Heart right ventricle (tissue), 16 donors: ENCODE measurements at regions of chr11 and their contacts with region 1.

Region 1: GRCh38 chr11:130002846-130003716 is 446 bp upstream of the PRDM10 start:
- DNase-seq: peak; percentile 93 to 96
- ATAC-seq: peak; percentile 86 to 97 (median 94)
- H3K4me3 ChIP-seq: peak overlapping the region; percentile 8 to 92 (median 74)
- H3K27ac ChIP-seq: peak overlapping the region; percentile 92 to 100 (median 99)
- H3K4me1 ChIP-seq: peaks cover 3 to 35% (median 18%) of the 10 kb centered on the region in 9 donors
- H3K27me3 ChIP-seq: no peaks in the 10 kb centered on the region
- CTCF ChIP-seq: no peak

Region 2: GRCh38 chr11:130042093-130042591 is 39.1 kb after region 1 on chr11:
- intact Hi-C with region 1: no loop called
- DNase-seq: peak in 1 of 2 donors; percentile 4
- ATAC-seq: peak in 6 of 8 donors; percentile 47 to 81 (median 66)
- H3K4me3 ChIP-seq: no peak overlapping the region
- H3K27ac ChIP-seq: peak overlapping the region in 1 of 10 donors; percentile 85
- H3K4me1 ChIP-seq: peaks cover 0 to 19% (median 0%) of the 10 kb centered on the region in 9 donors
- H3K27me3 ChIP-seq: no peaks in the 10 kb centered on the region
- CTCF ChIP-seq: no peak

Region 3: DNA sequence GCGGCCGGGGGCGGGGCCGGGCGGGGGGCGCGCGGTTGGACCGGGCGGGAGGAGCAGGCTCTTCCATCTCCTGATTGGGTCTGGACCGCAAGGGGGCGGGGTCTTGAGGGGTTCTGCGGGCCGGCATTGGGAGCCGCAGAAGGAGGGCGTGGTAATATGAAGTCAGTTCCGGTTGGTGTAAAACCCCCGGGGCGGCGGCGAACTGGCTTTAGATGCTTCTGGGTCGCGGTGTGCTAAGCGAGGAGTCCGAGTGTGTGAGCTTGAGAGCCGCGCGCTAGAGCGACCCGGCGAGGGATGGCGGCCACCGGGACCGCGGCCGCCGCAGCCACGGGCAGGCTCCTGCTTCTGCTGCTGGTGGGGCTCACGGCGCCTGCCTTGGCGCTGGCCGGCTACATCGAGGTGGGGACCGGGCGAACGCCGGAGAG is 66.6 kb after region 1 on chr11 and contains the start of gene APLP2:
- intact Hi-C with region 1: loop called in 9 of 10 experiments (anchors 1 to 5 kb)
- DNase-seq: peak; percentile 99 to 100
- ATAC-seq: peak; percentile 94 to 98 (median 96)
- H3K4me3 ChIP-seq: peak within 1 kb of the TSS; percentile 64 to 86 (median 80)
- H3K27ac ChIP-seq: peak within 1 kb of the TSS; percentile 81 to 99 (median 95)
- H3K4me1 ChIP-seq: peaks cover 0 to 34% (median 21%) of the 10 kb centered on the region in 9 donors
- H3K27me3 ChIP-seq: no peaks in the 10 kb centered on the region
- CTCF ChIP-seq: no peak
- total RNA-seq, gene APLP2: 265 to 414 (median 309) TPM

Region 4: DNA sequence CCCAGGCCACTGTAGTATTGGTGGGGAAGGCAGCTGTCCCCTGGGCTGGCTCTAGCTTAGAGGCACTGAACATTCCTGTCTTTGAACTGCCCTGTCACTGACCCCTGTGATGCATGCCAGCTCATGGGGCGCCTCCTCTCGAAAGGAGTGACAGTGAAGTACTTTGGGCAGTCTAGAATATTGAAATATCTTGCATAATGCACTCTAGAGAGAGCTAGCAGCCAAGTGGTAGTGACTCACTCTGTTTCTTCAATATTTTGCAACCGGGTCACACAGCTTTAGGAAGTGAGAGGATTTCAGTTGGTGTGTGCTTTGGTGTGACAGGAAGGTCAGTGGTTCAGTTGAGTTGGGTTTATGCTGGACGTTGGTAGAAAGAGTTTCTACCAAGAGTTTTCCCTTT is 121.0 kb after region 1 on chr11:
- intact Hi-C with region 1: loop called in 2 of 10 experiments (anchors 5 kb)
- DNase-seq: peak; percentile 53 to 72
- ATAC-seq: peak; percentile 81 to 99 (median 86)
- H3K4me3 ChIP-seq: no peak overlapping the region
- H3K27ac ChIP-seq: peak overlapping the region in 7 of 10 donors; percentile 27 to 83 (median 54)
- H3K4me1 ChIP-seq: peaks cover 0 to 75% (median 38%) of the 10 kb centered on the region in 9 donors
- H3K27me3 ChIP-seq: no peaks in the 10 kb centered on the region
- CTCF ChIP-seq: no peak

Region 5: GRCh38 chr11:130139401-130139800 is 136.3 kb after region 1 on chr11:
- intact Hi-C with region 1: loop called in 5 of 10 experiments (anchors 5 to 10 kb)
- DNase-seq: no peak
- ATAC-seq: peak in 7 of 8 donors; percentile 59 to 83 (median 74)
- H3K4me3 ChIP-seq: no peak overlapping the region
- H3K27ac ChIP-seq: peak overlapping the region in 7 of 10 donors; percentile 11 to 61 (median 48)
- H3K4me1 ChIP-seq: peaks cover 0 to 38% (median 23%) of the 10 kb centered on the region in 9 donors
- H3K27me3 ChIP-seq: no peaks in the 10 kb centered on the region
- CTCF ChIP-seq: no peak

Region 6: GRCh38 chr11:130213143-130213978 is 210.3 kb after region 1 on chr11:
- intact Hi-C with region 1: no loop called
- DNase-seq: peak; percentile 41 to 74
- ATAC-seq: peak; percentile 77 to 87 (median 82)
- H3K4me3 ChIP-seq: peak overlapping the region in 1 of 10 donors; percentile 9
- H3K27ac ChIP-seq: no peak overlapping the region
- H3K4me1 ChIP-seq: peaks cover 0 to 10% (median 5%) of the 10 kb centered on the region in 9 donors
- H3K27me3 ChIP-seq: peaks cover 0 to 8% (median 0%) of the 10 kb centered on the region in 7 donors
- CTCF ChIP-seq: peak; percentile 88 to 98 (median 97)